ENCODE measurements at regions of chr1 and their contacts with region 1.

Region 1: DNA sequence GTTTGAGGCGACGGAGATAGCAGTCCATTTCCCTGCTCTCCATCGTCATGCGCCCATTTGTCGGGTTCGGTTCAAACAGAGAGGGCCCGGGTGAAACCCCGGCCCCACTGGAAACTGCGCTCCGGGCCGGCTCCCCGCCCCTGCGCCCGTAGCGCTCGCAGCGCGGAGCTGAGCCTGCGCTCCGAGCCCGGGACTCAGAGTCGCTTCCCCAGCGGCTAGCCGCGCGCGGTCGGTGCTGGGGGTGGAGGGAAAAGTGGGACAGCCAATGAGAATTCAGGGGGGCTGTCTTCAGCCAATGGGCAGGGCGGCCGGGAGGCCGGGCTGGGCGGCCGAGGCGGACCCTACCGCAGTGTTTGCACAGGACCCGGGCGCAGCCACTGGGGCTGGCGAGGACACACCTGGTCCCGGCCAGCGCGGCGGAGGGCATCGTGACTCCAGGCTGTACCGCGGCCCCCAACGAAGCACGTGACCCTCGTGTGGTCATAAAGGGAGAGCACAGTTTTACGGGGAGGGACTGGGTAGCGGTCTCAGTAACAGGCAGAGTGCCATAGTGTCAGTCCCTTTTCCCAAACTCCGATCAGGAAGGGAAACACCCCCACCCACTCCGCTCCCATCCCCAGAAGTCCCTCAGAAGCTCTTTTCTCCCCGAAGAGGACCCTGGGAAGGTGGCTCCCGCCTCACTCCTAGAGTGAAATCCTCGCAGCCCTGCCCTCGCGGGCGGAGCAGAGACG is at the start of gene INKA2:
- DNase-seq: peak; percentile 89
- ATAC-seq: peak; percentile 75
- H3K4me3 ChIP-seq: peak within 1 kb of the TSS; percentile 67 to 81 (median 72)
- H3K4me3 Mint-ChIP-seq: peak within 1 kb of the TSS; percentile 97
- H3K27ac ChIP-seq: peak within 1 kb of the TSS; percentile 60 to 73
- H3K27ac Mint-ChIP-seq: peak within 1 kb of the TSS; percentile 91
- H3K4me1 ChIP-seq: peaks cover 15 to 25% of the 10 kb centered on the region in 2 donors
- H3K4me1 Mint-ChIP-seq: peaks cover 23% of the 10 kb centered on the region
- H3K27me3 ChIP-seq: peaks cover 0 to 39% (median 15%) of the 10 kb centered on the region in 4 experiments
- H3K27me3 Mint-ChIP-seq: peaks cover 6% of the 10 kb centered on the region
- CTCF ChIP-seq: no peak
- total RNA-seq, gene INKA2: 6.4 and 6.5 TPM in 2 replicates

Region 2: DNA sequence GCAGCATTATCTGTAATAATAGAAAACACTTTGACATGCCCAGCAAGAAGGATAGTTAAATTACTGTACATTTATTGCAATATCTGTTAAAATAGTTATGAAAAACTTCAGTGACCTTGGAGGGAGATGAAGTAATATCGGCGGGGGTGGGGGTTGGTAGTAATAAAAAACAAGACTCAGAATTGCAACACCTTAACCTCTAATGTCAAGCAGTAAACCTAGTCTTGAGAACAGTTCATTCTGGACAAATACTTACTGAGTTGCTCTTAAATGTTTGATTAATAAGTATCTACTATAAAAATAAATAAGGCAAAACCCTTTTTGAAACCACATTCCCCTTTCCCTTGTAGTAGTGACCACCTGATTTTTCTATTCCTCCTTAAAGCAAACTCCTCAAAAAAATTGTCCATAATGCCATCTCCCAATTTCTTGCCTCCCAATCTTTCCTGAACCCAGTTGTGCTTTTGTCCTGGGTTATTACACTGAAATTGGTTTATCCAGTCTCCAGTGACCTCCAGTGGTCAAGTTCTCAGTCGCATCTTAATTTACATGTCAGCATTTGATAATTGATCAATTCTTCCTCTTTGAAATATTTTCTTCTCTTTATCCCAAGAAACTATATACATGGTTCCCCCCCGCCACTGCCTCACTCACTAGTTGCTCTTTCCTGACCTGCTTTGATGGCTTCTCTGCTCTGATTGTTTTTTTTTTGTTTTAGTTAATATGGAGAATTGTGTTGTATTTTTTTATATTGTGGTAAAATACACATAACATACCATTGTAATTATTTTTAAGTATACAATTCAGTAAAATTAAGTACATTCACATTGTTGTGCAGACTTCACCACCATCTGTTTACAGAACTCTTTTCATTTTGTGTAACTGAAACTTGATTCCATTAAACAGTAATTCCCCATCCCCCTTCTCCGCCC is 83.0 kb before region 1 on chr1:
- CTCF ChIA-PET with region 1: no interaction called
- POLR2A ChIA-PET with region 1: no interaction called
- intact Hi-C with region 1: no loop called
- DNase-seq: peak; percentile 66
- ATAC-seq: no peak
- H3K4me3 ChIP-seq: no peak overlapping the region
- H3K4me3 Mint-ChIP-seq: no peak overlapping the region
- H3K27ac ChIP-seq: no peak overlapping the region
- H3K27ac Mint-ChIP-seq: no peak overlapping the region
- H3K4me1 ChIP-seq: peaks cover 30 to 33% of the 10 kb centered on the region in 2 donors
- H3K4me1 Mint-ChIP-seq: peaks cover 37% of the 10 kb centered on the region
- H3K27me3 ChIP-seq: no peaks in the 10 kb centered on the region
- H3K27me3 Mint-ChIP-seq: no peaks in the 10 kb centered on the region
- CTCF ChIP-seq: peak; percentile 75

Region 3: GRCh38 chr1:111755331-111756123 is 16.2 kb after region 1 on chr1 and contains the start of gene DDX20:
- CTCF ChIA-PET with region 1: interaction called, 17 read pairs
- POLR2A ChIA-PET with region 1: interaction called, 18 read pairs
- intact Hi-C with region 1: loop called (anchors 1 kb)
- DNase-seq: peak; percentile 98
- ATAC-seq: peak; percentile 92
- H3K4me3 ChIP-seq: peak within 1 kb of the TSS; percentile 62 to 95 (median 74)
- H3K4me3 Mint-ChIP-seq: peak within 1 kb of the TSS; percentile 88
- H3K27ac ChIP-seq: peak within 1 kb of the TSS; percentile 91 to 96
- H3K27ac Mint-ChIP-seq: peak within 1 kb of the TSS; percentile 94
- H3K4me1 ChIP-seq: peaks cover 14 to 16% of the 10 kb centered on the region in 2 donors
- H3K4me1 Mint-ChIP-seq: peaks cover 31% of the 10 kb centered on the region
- H3K27me3 ChIP-seq: no peaks in the 10 kb centered on the region
- H3K27me3 Mint-ChIP-seq: no peaks in the 10 kb centered on the region
- CTCF ChIP-seq: peak; percentile 95
- total RNA-seq, gene DDX20: 22.3 and 24.6 TPM in 2 replicates

Region 4: GRCh38 chr1:111776391-111776790 is 37.0 kb after region 1 on chr1:
- CTCF ChIA-PET with region 1: no interaction called
- POLR2A ChIA-PET with region 1: no interaction called
- intact Hi-C with region 1: no loop called
- DNase-seq: no peak
- ATAC-seq: no peak
- H3K4me3 ChIP-seq: no peak overlapping the region
- H3K4me3 Mint-ChIP-seq: no peak overlapping the region
- H3K27ac ChIP-seq: no peak overlapping the region
- H3K27ac Mint-ChIP-seq: no peak overlapping the region
- H3K4me1 ChIP-seq: no peaks in the 10 kb centered on the region
- H3K4me1 Mint-ChIP-seq: no peaks in the 10 kb centered on the region
- H3K27me3 ChIP-seq: no peaks in the 10 kb centered on the region
- H3K27me3 Mint-ChIP-seq: peaks cover 10% of the 10 kb centered on the region
- CTCF ChIP-seq: no peak

Region 5: DNA sequence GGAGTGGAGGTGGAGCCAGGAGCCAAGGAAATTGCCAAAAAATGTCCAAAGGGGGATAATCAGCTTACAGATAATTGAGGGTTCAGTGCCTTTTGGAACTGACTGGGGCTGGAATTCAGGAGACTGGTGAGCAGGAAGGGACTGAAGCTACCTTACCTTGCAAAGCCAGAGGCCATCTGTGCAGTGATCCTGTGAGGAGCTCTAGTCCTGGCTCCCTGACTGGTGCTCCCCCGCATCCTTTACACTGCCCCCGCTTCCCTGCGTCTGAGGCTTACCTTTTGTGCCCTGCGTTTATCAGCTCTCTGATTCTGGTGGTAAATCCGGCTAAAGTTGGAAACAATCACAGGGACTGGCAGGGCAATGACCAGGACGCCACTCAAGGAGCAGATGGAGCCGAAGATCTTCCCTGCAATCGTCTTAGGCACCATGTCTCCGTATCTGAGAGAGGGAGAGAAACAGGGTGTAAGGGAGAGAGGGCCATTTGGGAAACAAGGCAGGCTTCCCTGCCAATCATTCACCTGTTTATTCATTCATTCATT is 47.4 kb after region 1 on chr1:
- CTCF ChIA-PET with region 1: no interaction called
- POLR2A ChIA-PET with region 1: no interaction called
- intact Hi-C with region 1: no loop called
- DNase-seq: no peak
- ATAC-seq: no peak
- H3K4me3 ChIP-seq: no peak overlapping the region
- H3K4me3 Mint-ChIP-seq: no peak overlapping the region
- H3K27ac ChIP-seq: no peak overlapping the region
- H3K27ac Mint-ChIP-seq: no peak overlapping the region
- H3K4me1 ChIP-seq: peaks cover 7 to 15% of the 10 kb centered on the region in 2 donors
- H3K4me1 Mint-ChIP-seq: peaks cover 12% of the 10 kb centered on the region
- H3K27me3 ChIP-seq: peaks cover 0 to 22% (median 5%) of the 10 kb centered on the region in 4 experiments
- H3K27me3 Mint-ChIP-seq: peaks cover 36% of the 10 kb centered on the region
- CTCF ChIP-seq: no peak

Measured in B cell (primary cell).